ENCODE measurements at regions of chr1 and their contacts with region 1.

Region 1: DNA sequence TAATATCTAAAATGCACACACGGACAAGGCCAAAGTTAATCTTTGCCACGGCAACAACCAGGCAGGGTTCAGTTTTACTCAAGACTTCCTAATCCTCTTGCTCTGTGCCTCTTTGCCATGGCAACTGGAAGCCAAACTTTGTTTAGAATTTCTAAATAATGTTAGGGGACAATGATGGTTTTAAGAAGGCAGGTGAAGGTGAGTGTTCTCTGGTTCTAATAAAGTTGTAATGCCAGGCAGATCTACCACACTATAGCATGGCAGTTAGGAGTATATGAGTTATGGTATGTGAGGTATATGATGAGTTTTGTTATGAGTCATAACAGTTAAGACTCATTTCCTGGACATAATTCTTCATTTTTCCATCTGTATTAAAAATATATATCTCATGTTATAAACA is 2.7 kb downstream of the PTPRC start:
- DNase-seq: peak in 1 of 4 experiments; percentile 52
- ATAC-seq: peak; percentile 55
- H3K4me3 ChIP-seq: peak overlapping the region; percentile 37
- H3K27ac ChIP-seq: peak overlapping the region; percentile 79
- H3K4me1 ChIP-seq: peaks cover 0 to 2% of the 10 kb centered on the region in 2 experiments; a peak in 1 of 5 replicates
- H3K27me3 ChIP-seq: no peaks in the 10 kb centered on the region
- CTCF ChIP-seq: no peak
- EP300 ChIP-seq: no peak
- POLR2A ChIP-seq: no peak
- RAD21 ChIP-seq: no peak

Region 2: DNA sequence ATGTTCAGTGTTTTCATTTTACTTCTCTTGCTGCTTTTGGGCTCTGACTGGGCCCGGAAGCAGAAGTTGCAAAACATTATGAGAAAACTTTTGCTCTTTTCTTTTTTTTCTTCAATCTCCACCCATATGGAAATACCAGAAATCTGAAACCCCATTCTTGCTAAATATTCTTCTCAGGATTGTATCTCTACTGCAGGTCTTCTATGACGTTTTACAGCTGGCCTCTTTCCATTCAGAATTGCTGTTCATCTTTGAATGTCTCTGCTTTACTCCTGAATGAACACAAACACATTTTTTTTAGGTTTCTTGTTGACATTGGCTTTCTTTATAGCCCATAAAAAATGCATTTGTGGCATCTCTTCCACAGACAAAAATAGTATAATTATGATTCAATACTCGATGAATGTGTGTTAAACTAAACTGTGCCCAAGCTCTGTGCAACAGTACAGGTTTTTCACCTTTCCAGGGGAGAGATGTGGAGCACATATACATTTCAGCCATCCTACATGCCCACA is 16.1 kb after region 1 on chr1:
- CTCF ChIA-PET with region 1: no interaction called
- POLR2A ChIA-PET with region 1: interaction called, 3 read pairs
- in situ Hi-C with region 1: no loop called
- intact Hi-C with region 1: loop called (anchors 2 kb)
- DNase-seq: peak in 1 of 4 experiments; percentile 21
- ATAC-seq: peak; percentile 26
- H3K4me3 ChIP-seq: no peak overlapping the region
- H3K27ac ChIP-seq: peak overlapping the region; percentile 59; the same call in 2 of the 3 replicates
- H3K4me1 ChIP-seq: peaks cover 0 to 23% of the 10 kb centered on the region in 2 experiments; a peak in 3 of 5 replicates
- H3K27me3 ChIP-seq: no peaks in the 10 kb centered on the region
- CTCF ChIP-seq: no peak
- EP300 ChIP-seq: no peak
- POLR2A ChIP-seq: no peak
- RAD21 ChIP-seq: no peak

Region 3: DNA sequence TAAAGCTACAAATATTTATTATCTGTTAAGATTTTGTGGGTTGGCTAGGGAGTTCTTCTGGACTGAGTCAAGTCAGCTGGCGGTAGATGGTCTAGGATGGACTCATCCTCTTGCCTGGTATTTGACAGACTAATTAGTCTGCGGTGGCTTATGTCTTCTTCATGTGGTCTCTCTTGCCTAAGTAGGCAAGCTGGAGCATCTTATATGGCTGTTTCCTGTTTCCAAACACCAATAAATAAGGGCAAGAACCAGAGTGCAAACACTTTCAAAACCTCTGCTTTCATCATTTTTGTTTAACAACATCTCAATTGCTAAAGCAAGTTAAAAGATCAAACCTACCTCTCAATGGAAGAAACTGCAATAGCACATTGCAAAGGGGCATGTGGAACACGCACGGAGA is 482.1 kb after region 1 on chr1:
- CTCF ChIA-PET with region 1: no interaction called
- POLR2A ChIA-PET with region 1: no interaction called
- in situ Hi-C with region 1: no loop called
- intact Hi-C with region 1: no loop called
- DNase-seq: no peak
- ATAC-seq: no peak
- H3K4me3 ChIP-seq: no peak overlapping the region
- H3K27ac ChIP-seq: no peak overlapping the region
- H3K4me1 ChIP-seq: no peaks in the 10 kb centered on the region
- H3K27me3 ChIP-seq: no peaks in the 10 kb centered on the region
- CTCF ChIP-seq: no peak
- EP300 ChIP-seq: no peak
- POLR2A ChIP-seq: no peak
- RAD21 ChIP-seq: no peak

Measured in K562 (cell line).